ENCODE measurements at regions of chr1 and their contacts with region 1.

Region 1: GRCh38 chr1:40668769-40669525 is 3.5 kb upstream of the RIMS3 start:
- DNase-seq: peak; percentile 78
- H3K4me3 ChIP-seq: no peak overlapping the region
- H3K27ac ChIP-seq: no peak overlapping the region
- H3K4me1 ChIP-seq: no peaks in the 10 kb centered on the region
- H3K27me3 ChIP-seq: peaks cover 16 to 20% of the 10 kb centered on the region in 2 experiments
- CTCF ChIP-seq: peak; percentile 87 to 91
- POLR2A ChIP-seq: no peak

Region 2: GRCh38 chr1:40593449-40594186 is 75.3 kb before region 1 on chr1:
- CTCF ChIA-PET with region 1: no interaction called
- POLR2A ChIA-PET with region 1: no interaction called
- dilution Hi-C with region 1: no loop called
- intact Hi-C with region 1: no loop called
- DNase-seq: no peak
- H3K4me3 ChIP-seq: no peak overlapping the region
- H3K27ac ChIP-seq: no peak overlapping the region
- H3K4me1 ChIP-seq: no peaks in the 10 kb centered on the region
- H3K27me3 ChIP-seq: no peaks in the 10 kb centered on the region
- CTCF ChIP-seq: no peak
- POLR2A ChIP-seq: no peak

Region 3: GRCh38 chr1:40612345-40612831 is 56.6 kb before region 1 on chr1:
- CTCF ChIA-PET with region 1: interaction called, 5 read pairs
- POLR2A ChIA-PET with region 1: no interaction called
- dilution Hi-C with region 1: no loop called
- intact Hi-C with region 1: loop called (anchors 1 kb)
- DNase-seq: peak; percentile 71
- H3K4me3 ChIP-seq: no peak overlapping the region
- H3K27ac ChIP-seq: no peak overlapping the region
- H3K4me1 ChIP-seq: no peaks in the 10 kb centered on the region
- H3K27me3 ChIP-seq: peaks cover 1 to 11% of the 10 kb centered on the region in 2 experiments
- CTCF ChIP-seq: peak; percentile 75 to 81
- POLR2A ChIP-seq: no peak

Region 4: DNA sequence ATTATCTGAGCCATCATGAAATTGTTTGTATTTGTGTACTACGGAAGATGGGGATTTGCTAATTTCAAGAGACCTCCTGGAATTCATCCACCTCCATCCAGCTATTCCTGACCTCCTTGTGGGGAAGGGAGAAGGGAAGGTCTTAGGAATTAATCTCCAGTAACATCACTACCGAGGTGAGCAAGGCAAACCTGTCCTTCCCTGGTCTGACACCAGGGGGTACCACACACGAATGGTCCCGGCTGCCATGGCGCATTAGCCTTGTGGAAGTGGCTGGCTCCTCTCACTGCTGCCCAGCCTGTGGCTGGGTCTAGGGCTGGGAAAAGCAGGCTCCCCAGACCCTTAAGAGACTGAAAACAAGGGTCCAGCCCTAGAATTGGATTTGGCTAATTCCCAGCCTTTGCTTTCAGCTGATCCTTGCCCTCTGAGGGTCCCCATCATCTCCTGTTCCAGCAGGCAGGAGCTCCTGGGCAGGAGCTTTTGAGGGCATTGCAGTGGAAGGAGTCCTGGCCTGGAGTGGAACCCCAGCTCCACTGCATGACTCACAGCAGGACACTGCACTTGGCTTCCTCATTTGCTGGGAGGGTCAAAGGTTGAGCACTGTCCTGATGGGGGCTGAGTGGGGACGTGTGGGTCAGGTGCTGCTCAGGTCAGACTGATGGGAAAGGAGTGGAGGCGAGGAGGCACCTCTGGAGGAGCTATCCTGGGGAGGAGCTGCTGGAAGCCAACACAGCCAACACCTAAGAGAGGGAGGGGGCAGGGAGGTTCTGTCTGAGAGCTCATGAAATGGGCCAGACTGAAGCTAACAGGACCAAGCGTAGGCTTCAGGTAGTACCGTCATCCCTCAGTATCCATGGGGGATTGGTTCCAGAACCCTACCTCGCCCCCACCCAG is 38.2 kb before region 1 on chr1:
- CTCF ChIA-PET with region 1: interaction called, 28 read pairs
- POLR2A ChIA-PET with region 1: no interaction called
- dilution Hi-C with region 1: no loop called
- intact Hi-C with region 1: loop called (anchors 1 kb)
- DNase-seq: peak; percentile 51
- H3K4me3 ChIP-seq: no peak overlapping the region
- H3K27ac ChIP-seq: no peak overlapping the region
- H3K4me1 ChIP-seq: no peaks in the 10 kb centered on the region
- H3K27me3 ChIP-seq: peaks cover 0 to 4% of the 10 kb centered on the region in 2 experiments
- CTCF ChIP-seq: peak; percentile 62 to 73
- POLR2A ChIP-seq: no peak

Region 5: DNA sequence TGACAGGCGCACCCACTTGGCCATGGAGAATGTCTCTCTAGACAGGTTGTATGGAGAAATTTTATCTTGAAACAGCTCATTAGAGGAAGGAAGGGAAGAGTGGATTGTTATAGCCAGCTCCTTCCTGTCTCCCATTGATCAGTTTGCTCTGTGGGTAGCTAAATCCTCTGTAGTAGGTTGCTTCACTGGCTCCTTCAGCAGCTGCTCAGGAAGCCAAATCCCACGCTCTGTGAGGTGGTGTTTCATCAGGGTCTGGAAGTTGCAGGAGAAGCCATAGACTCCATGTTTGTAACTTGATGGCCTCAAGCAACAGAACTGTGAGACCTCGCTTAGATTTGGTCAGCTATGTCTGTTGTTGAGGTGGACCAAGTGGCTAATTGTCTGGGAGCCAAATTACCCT is 15.7 kb after region 1 on chr1:
- CTCF ChIA-PET with region 1: interaction called, 14 read pairs
- POLR2A ChIA-PET with region 1: no interaction called
- dilution Hi-C with region 1: no loop called
- intact Hi-C with region 1: no loop called
- DNase-seq: no peak
- H3K4me3 ChIP-seq: no peak overlapping the region
- H3K27ac ChIP-seq: no peak overlapping the region
- H3K4me1 ChIP-seq: no peaks in the 10 kb centered on the region
- H3K27me3 ChIP-seq: no peaks in the 10 kb centered on the region
- CTCF ChIP-seq: no peak
- POLR2A ChIP-seq: no peak

Region 6: DNA sequence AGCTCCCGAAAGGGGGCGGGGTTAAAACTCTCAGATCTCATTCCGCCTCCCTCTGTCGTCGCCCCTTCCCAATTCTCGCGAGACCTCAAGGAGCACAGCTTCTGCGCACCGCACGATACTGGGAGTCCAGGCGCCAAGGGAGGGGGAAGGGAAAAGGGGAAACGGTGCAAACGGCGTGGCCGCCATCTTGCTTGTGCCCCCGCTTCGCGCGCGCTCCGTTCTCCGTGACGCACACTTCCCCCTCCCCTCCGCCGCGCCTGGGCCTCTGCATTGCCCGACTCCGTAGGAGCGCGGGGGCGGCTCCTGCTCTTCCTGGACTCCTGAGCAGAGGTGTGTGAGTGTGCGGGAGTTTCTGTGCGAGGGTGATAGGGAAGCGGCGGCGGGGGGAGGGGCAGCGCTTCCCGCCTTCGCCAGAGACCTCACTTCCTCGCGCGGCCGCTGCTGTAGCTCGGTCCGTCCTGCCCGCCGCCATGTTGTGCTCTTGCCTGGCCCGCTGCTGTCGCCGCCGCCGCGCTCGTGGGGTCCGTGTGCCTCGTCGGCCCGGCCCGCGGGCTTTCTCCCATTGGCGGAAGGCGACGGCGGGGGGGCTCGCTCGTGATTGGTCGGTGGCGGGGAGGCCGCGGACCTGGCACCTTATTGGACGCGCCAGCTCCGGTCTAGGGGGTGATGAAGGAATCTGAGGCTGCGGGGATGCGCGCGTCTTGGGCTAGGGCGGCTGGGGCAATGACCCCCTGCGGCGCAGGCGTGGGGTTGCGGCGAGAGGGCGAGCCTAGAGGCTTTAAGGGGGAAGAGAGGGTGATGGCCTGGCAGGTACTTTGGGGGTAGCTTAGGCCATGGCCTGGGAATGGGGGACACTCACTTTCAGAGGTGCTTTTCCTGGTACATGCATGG is 22.8 kb after region 1 on chr1 and contains the start of gene NFYC:
- CTCF ChIA-PET with region 1: interaction called, 17 read pairs
- POLR2A ChIA-PET with region 1: no interaction called
- dilution Hi-C with region 1: no loop called
- intact Hi-C with region 1: no loop called
- DNase-seq: peak; percentile 98
- H3K4me3 ChIP-seq: peak within 1 kb of the TSS; percentile 37 to 95 (median 78)
- H3K27ac ChIP-seq: peak within 1 kb of the TSS; percentile 68
- H3K4me1 ChIP-seq: peaks cover 19% of the 10 kb centered on the region
- H3K27me3 ChIP-seq: no peaks in the 10 kb centered on the region
- CTCF ChIP-seq: no peak
- POLR2A ChIP-seq: peak; percentile 76
- total RNA-seq, gene NFYC: 44.0 and 51.1 TPM in 2 replicates

Region 7: DNA sequence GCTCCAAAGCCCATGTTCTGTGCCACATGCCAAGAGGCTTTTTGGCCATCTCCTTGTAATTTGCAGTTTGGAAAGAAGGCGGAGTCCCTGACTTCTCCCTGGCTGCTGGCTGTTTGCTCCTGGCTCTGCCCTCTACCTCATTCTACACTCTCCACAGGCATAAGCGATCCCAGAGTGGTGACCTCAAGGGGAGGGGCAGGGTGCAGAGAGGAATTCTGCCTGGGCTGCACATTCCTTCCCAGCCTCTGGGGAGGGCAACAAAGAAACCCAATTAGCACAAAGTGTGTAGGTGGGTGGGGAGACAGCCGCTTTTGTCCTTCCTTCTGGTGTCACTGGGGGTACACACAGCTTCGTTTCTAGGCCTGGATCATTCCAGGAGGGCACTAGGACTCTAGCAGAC is 1154.5 kb after region 1 on chr1:
- CTCF ChIA-PET with region 1: no interaction called
- POLR2A ChIA-PET with region 1: no interaction called
- dilution Hi-C with region 1: no loop called
- intact Hi-C with region 1: no loop called
- DNase-seq: no peak
- H3K4me3 ChIP-seq: no peak overlapping the region
- H3K27ac ChIP-seq: no peak overlapping the region
- H3K4me1 ChIP-seq: no peaks in the 10 kb centered on the region
- H3K27me3 ChIP-seq: no peaks in the 10 kb centered on the region
- CTCF ChIP-seq: no peak
- POLR2A ChIP-seq: no peak